ENCODE measurements at regions of chr2 and their contacts with region 1.

Region 1: GRCh38 chr2:111054791-111055691 is 65.7 kb upstream of the BCL2L11 start:
- DNase-seq: peak; percentile 74
- H3K4me3 Mint-ChIP-seq: no peak overlapping the region
- H3K27ac Mint-ChIP-seq: no peak overlapping the region
- H3K4me1 Mint-ChIP-seq: peaks cover 32% of the 10 kb centered on the region
- H3K27me3 Mint-ChIP-seq: peaks cover 61% of the 10 kb centered on the region

Region 2: DNA sequence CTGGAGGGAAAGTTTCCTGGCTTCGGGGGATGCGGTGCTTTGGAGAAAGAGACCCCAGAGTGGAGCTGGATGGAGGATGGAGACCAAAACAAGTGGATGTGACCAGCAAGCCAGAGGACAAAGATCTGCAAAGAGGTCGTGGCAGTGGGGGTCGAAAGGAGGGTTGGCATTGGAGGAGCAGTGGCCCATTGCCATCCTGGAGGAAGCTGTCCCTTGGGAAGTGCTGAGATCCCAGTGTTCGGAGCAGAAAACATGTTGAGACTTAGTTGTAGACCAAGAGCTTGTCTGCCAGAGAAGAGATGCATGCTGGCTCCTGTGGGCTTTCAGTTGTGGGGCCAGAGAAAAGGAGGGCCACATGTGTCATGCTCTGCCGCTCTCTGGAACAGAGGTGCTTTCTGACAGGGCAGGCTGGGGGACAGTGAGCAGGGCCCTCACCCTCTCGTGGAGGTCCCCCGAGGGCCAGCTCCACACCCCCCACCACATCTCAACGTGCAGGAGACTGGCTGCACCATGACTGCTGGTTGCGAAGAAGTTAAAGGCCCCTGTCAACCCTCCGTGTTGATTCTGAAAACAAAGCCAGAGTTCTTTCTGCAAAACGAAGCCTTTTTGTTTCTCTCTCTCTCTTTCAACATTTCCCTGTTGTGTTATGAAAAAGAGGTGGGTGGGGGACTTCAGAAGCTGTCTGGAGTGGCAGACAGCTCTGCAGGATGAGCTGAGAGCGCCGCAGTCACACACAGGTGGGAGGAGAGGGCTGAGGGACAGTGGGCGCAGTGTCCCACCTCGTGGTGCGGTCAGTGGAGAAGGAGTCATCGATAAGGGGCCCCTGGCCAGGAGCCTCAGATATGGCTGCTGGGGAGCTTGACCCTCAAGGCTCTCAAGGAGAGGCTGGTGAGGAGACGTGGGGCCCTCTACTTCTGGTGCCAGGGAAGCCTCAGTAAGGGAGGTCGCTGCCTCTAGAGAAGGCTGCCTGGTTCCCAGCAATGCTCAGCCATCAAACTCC is 12.0 kb before region 1 on chr2:
- CTCF ChIA-PET with region 1: no interaction called
- POLR2A ChIA-PET with region 1: interaction called, 5 read pairs
- intact Hi-C with region 1: loop called (anchors 1 kb)
- DNase-seq: peak; percentile 55
- H3K4me3 Mint-ChIP-seq: no peak overlapping the region
- H3K27ac Mint-ChIP-seq: no peak overlapping the region
- H3K4me1 Mint-ChIP-seq: peaks cover 20% of the 10 kb centered on the region
- H3K27me3 Mint-ChIP-seq: peaks cover 63% of the 10 kb centered on the region

Region 3: GRCh38 chr2:111100765-111101162 is 45.7 kb after region 1 on chr2:
- CTCF ChIA-PET with region 1: no interaction called
- POLR2A ChIA-PET with region 1: no interaction called
- intact Hi-C with region 1: loop called (anchors 1 kb)
- DNase-seq: peak; percentile 51
- H3K4me3 Mint-ChIP-seq: no peak overlapping the region
- H3K27ac Mint-ChIP-seq: no peak overlapping the region
- H3K4me1 Mint-ChIP-seq: peaks cover 22% of the 10 kb centered on the region
- H3K27me3 Mint-ChIP-seq: peaks cover 38% of the 10 kb centered on the region

Measured in activated CD4-positive, alpha-beta memory T cell treated with anti-CD3 and anti-CD28 coated beads for 36 hours (primary cell).